Panc1 (cell line): ENCODE measurements at regions of chr7 and their contacts with region 1.

Region 1: DNA sequence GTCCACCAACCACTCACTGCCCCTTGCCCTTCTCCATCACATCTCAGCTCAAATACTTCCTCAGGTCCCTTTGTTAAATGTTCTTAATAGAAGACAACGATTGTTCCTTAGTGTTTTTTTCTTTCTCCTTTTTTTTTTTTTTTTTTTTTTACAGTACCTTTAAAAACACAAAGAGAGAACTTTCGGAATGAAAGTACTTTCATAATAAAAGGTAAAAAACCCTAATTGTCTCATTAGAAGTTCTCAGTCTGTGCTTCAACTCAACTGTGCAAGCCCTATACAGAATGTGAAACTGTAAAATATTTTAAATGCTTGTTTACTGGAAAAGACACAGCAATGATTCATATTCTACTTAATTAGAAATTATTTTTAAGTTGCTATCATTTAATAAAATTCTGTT is 29.4 kb downstream of the TSPAN12 start:
- DNase-seq: no peak
- ATAC-seq: no peak
- H3K4me3 ChIP-seq: no peak overlapping the region
- H3K27ac ChIP-seq: no peak overlapping the region
- H3K4me1 ChIP-seq: no peaks in the 10 kb centered on the region
- H3K27me3 ChIP-seq: no peaks in the 10 kb centered on the region
- CTCF ChIP-seq: no peak

Region 2: GRCh38 chr7:120714945-120715344 is 113.6 kb before region 1 on chr7:
- CTCF ChIA-PET with region 1: no interaction called
- POLR2A ChIA-PET with region 1: no interaction called
- in situ Hi-C with region 1: no loop called
- intact Hi-C with region 1: no loop called
- DNase-seq: no peak
- ATAC-seq: no peak
- H3K4me3 ChIP-seq: no peak overlapping the region
- H3K27ac ChIP-seq: no peak overlapping the region
- H3K4me1 ChIP-seq: no peaks in the 10 kb centered on the region
- H3K27me3 ChIP-seq: no peaks in the 10 kb centered on the region
- CTCF ChIP-seq: no peak

Region 3: GRCh38 chr7:120857588-120858573 is 29.4 kb after region 1 on chr7 and contains the start of gene TSPAN12:
- CTCF ChIA-PET with region 1: interaction called, 11 read pairs
- POLR2A ChIA-PET with region 1: no interaction called
- in situ Hi-C with region 1: no loop called
- intact Hi-C with region 1: no loop called
- DNase-seq: no peak
- ATAC-seq: peak; percentile 96
- H3K4me3 ChIP-seq: peak within 1 kb of the TSS; percentile 53 to 64
- H3K27ac ChIP-seq: no peak within 1 kb of the TSS
- H3K4me1 ChIP-seq: peaks cover 10% of the 10 kb centered on the region; the same call in 1 of the 2 replicates
- H3K27me3 ChIP-seq: peaks cover 32% of the 10 kb centered on the region
- CTCF ChIP-seq: peak; percentile 85
- total RNA-seq, gene TSPAN12: 1.4 TPM

Region 4: GRCh38 chr7:120961638-120962173 is 133.2 kb after region 1 on chr7:
- CTCF ChIA-PET with region 1: no interaction called
- POLR2A ChIA-PET with region 1: no interaction called
- in situ Hi-C with region 1: no loop called
- intact Hi-C with region 1: no loop called
- DNase-seq: no peak
- ATAC-seq: no peak
- H3K4me3 ChIP-seq: no peak overlapping the region
- H3K27ac ChIP-seq: no peak overlapping the region
- H3K4me1 ChIP-seq: no peaks in the 10 kb centered on the region
- H3K27me3 ChIP-seq: no peaks in the 10 kb centered on the region
- CTCF ChIP-seq: no peak